Activated B cell treated with CpG ODN at 0.5 μM for 24 hours (primary cell): ENCODE measurements at regions of chr12 and their contacts with region 1.

Region 1: GRCh38 chr12:332581-333205 is 56.4 kb downstream of the KDM5A start:
- DNase-seq: no peak
- ATAC-seq: no peak
- H3K4me3 Mint-ChIP-seq: no peak overlapping the region
- H3K27ac Mint-ChIP-seq: no peak overlapping the region
- H3K4me1 Mint-ChIP-seq: no peaks in the 10 kb centered on the region
- H3K27me3 Mint-ChIP-seq: no peaks in the 10 kb centered on the region
- CTCF ChIP-seq: no peak

Region 2: GRCh38 chr12:356276-356988 is 23.7 kb after region 1 on chr12:
- CTCF ChIA-PET with region 1: no interaction called
- POLR2A ChIA-PET with region 1: interaction called, 11 read pairs
- intact Hi-C with region 1: no loop called
- DNase-seq: no peak
- ATAC-seq: no peak
- H3K4me3 Mint-ChIP-seq: no peak overlapping the region
- H3K27ac Mint-ChIP-seq: no peak overlapping the region
- H3K4me1 Mint-ChIP-seq: no peaks in the 10 kb centered on the region
- H3K27me3 Mint-ChIP-seq: no peaks in the 10 kb centered on the region
- CTCF ChIP-seq: no peak